ENCODE measurements at regions of chr6 and their contacts with region 1.

Region 1: DNA sequence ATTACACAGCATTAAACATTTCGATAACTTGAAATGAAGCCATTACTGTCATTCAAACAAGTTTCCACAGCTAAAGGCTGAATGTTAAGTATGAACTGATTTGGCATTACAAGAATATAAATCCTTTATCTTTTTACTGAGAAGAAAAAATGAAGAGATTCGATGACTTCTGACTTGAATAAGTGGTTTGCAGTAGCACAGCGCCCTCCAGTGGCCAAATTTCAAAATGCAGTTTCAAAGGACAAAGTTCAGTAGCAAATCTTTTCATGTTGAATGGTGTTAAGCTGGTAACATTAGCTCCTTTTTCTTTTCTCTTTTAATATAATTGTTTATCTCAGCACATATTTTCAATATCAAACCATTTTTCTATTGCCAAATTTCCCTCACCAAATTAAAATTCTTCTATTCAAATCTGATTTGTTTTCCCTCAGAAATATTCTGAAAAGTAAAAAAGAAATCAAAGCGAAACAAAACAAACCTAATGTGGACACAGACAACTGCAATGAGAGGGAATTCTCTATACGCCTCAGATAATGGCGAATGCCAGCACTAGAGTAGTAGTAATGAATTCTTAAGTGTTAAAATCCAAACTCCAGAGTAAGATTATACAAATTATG is 145.7 kb downstream of the BTBD9 start:
- DNase-seq: peak; percentile 90
- ATAC-seq: 0 out of 2 replicates have a peak, but pooled peaks have one; percentile 40
- H3K4me3 ChIP-seq: no peak overlapping the region
- H3K27ac ChIP-seq: no peak overlapping the region
- H3K4me1 ChIP-seq: no peaks in the 10 kb centered on the region
- H3K27me3 ChIP-seq: no peaks in the 10 kb centered on the region
- CTCF ChIP-seq: peak; percentile 95

Region 2: GRCh38 chr6:38034274-38034914 is 459.6 kb before region 1 on chr6:
- CTCF ChIA-PET with region 1: interaction called, 5 read pairs
- POLR2A ChIA-PET with region 1: no interaction called
- intact Hi-C with region 1: loop called (anchors 1 kb)
- DNase-seq: peak; percentile 71
- ATAC-seq: peak; percentile 95
- H3K4me3 ChIP-seq: no peak overlapping the region
- H3K27ac ChIP-seq: no peak overlapping the region
- H3K4me1 ChIP-seq: peaks cover 30% of the 10 kb centered on the region
- H3K27me3 ChIP-seq: no peaks in the 10 kb centered on the region
- CTCF ChIP-seq: peak; percentile 90

Region 3: DNA sequence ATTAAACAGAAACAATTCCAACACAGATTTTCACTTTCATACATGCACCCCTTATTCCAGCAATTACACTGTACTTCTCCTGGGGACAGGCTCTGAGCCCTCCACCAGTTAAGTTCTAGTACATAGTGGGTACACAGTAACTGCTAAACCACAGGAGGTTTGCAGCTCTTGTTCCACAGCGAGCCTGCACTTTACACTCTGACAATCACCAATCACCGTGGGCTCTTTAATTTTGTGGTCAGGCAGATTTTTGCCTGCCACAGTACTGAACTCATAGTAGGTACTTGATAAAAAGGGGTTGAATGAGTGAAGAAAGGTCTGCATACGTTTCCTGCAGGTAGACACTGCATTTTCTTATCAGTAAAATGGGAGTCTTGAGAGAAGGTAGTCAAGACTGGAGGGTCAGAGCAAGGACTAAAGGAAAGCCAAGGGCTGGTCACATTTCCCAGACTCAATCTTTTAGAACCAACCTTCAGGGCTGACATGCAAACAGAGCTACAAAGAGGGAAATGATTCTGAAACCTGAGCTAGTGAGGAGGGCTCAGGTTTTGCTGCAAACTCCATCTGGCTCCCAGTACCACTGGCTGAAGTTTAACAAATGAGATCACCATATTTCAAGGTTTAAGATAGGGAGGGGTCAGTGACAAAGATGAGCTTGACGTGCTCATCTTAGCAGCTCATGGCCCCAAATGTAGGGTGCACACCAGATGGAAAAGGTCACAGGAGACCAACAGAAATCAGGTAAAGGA is 258.9 kb before region 1 on chr6:
- CTCF ChIA-PET with region 1: no interaction called
- POLR2A ChIA-PET with region 1: no interaction called
- intact Hi-C with region 1: loop called (anchors 5 kb)
- DNase-seq: no peak
- ATAC-seq: no peak
- H3K4me3 ChIP-seq: no peak overlapping the region
- H3K27ac ChIP-seq: no peak overlapping the region
- H3K4me1 ChIP-seq: peaks cover 38% of the 10 kb centered on the region
- H3K27me3 ChIP-seq: no peaks in the 10 kb centered on the region
- CTCF ChIP-seq: no peak

Region 4: GRCh38 chr6:38542031-38542430 is 48.0 kb after region 1 on chr6:
- CTCF ChIA-PET with region 1: no interaction called
- POLR2A ChIA-PET with region 1: no interaction called
- intact Hi-C with region 1: no loop called
- DNase-seq: peak; percentile 34
- ATAC-seq: no peak
- H3K4me3 ChIP-seq: no peak overlapping the region
- H3K27ac ChIP-seq: no peak overlapping the region
- H3K4me1 ChIP-seq: no peaks in the 10 kb centered on the region
- H3K27me3 ChIP-seq: no peaks in the 10 kb centered on the region
- CTCF ChIP-seq: no peak

Region 5: GRCh38 chr6:38570750-38571149 is 76.7 kb after region 1 on chr6:
- CTCF ChIA-PET with region 1: interaction called, 3 read pairs
- POLR2A ChIA-PET with region 1: no interaction called
- intact Hi-C with region 1: loop called (anchors 5 kb)
- DNase-seq: peak; percentile 62
- ATAC-seq: peak; percentile 27; the same call in 1 of the 2 replicates
- H3K4me3 ChIP-seq: no peak overlapping the region
- H3K27ac ChIP-seq: no peak overlapping the region
- H3K4me1 ChIP-seq: peaks cover 21% of the 10 kb centered on the region
- H3K27me3 ChIP-seq: no peaks in the 10 kb centered on the region
- CTCF ChIP-seq: peak; percentile 83

Region 6: GRCh38 chr6:39048481-39049399 is 554.7 kb after region 1 on chr6 and contains the start of gene GLP1R:
- CTCF ChIA-PET with region 1: no interaction called
- POLR2A ChIA-PET with region 1: no interaction called
- intact Hi-C with region 1: no loop called
- DNase-seq: no peak
- ATAC-seq: no peak
- H3K4me3 ChIP-seq: no peak within 1 kb of the TSS
- H3K27ac ChIP-seq: no peak within 1 kb of the TSS
- H3K4me1 ChIP-seq: peaks cover 9% of the 10 kb centered on the region; the same call in 1 of the 2 replicates
- H3K27me3 ChIP-seq: peaks cover 16% of the 10 kb centered on the region
- CTCF ChIP-seq: no peak
- total RNA-seq, gene GLP1R: not detected in 2 replicates

Measured in PC-3 (cell line).